ENCODE measurements at regions of chr16 and their contacts with region 1.

Region 1: GRCh38 chr16:18801197-18801972 is at the start of gene ARL6IP1:
- DNase-seq: peak; percentile 100
- ATAC-seq: peak; percentile 98 to 99
- total RNA-seq, gene ARL6IP1: 37.0 to 39.8 TPM

Region 2: GRCh38 chr16:18829251-18829650 is 27.9 kb after region 1 on chr16:
- intact Hi-C with region 1: no loop called
- DNase-seq: no peak
- ATAC-seq: no peak

Region 3: GRCh38 chr16:18969050-18969854 is 167.9 kb after region 1 on chr16:
- intact Hi-C with region 1: loop called in 1 of 2 experiments (anchors 10 kb)
- DNase-seq: peak; percentile 88
- ATAC-seq: peak; percentile 95 to 97

Measured in left cardiac atrium (tissue), 4 donors.